CD4-positive, alpha-beta memory T cell (primary cell): ENCODE measurements at regions of chr3 and their contacts with region 1.

Region 1: DNA sequence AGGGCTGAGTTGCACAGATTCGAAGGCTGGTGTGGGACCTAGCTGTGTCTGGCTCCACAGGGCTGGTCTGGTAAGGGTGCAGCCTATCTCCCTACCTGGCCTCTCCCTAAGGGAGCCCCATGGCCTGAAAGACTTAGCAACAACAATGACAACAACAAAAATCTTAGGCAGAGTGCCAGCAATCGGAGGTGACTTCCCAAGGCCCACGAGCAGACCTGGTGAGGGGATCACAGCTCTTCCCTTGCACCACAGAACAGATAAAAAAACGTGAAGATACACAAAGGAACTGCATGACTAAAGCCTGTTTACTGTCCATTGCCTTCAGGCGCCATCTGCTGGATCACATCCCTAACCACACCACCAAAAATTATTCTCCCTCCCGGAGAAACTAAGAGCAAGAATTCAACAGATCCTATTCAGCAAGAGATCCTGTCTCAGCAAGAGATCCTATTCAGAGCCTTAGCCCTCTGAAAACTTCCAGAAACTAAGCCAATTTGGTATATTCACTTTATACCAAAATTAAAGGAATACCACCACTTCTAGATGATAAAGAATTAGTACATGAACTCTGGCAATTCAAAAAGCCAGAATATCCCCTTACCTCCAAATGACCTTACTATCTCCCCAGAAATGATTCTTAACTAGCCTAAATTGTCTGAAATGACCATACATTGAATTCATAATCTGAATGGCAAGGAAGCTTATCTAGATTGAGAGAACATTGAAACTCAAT is 24.1 kb upstream of the OR5K4 start:
- DNase-seq: peak; percentile 38 to 56 (median 51)
- H3K4me3 ChIP-seq: no peak overlapping the region
- H3K4me3 Mint-ChIP-seq: peak overlapping the region in 1 of 8 donors; percentile 0
- H3K27ac ChIP-seq: no peak overlapping the region
- H3K27ac Mint-ChIP-seq: peak overlapping the region in 1 of 7 donors; percentile 6
- H3K4me1 ChIP-seq: no peaks in the 10 kb centered on the region
- H3K4me1 Mint-ChIP-seq: peaks cover 0 to 4% (median 2%) of the 10 kb centered on the region in 4 donors
- H3K27me3 ChIP-seq: no peaks in the 10 kb centered on the region
- H3K27me3 Mint-ChIP-seq: peaks cover 12 to 13% of the 10 kb centered on the region in 2 donors

Region 2: GRCh38 chr3:98188545-98188944 is 141.0 kb before region 1 on chr3:
- CTCF ChIA-PET with region 1: interaction called, 3 read pairs
- POLR2A ChIA-PET with region 1: no interaction called
- intact Hi-C with region 1: loop called (anchors 1 kb)
- DNase-seq: peak in 4 of 5 donors; percentile 15 to 26 (median 17)
- H3K4me3 ChIP-seq: no peak overlapping the region
- H3K4me3 Mint-ChIP-seq: peak overlapping the region in 1 of 8 donors; percentile 37
- H3K27ac ChIP-seq: no peak overlapping the region
- H3K27ac Mint-ChIP-seq: peak overlapping the region in 2 of 7 donors; percentile 25 to 44
- H3K4me1 ChIP-seq: no peaks in the 10 kb centered on the region
- H3K4me1 Mint-ChIP-seq: peaks cover 0 to 7% (median 2%) of the 10 kb centered on the region in 4 donors
- H3K27me3 ChIP-seq: no peaks in the 10 kb centered on the region
- H3K27me3 Mint-ChIP-seq: peaks cover 3 to 7% of the 10 kb centered on the region in 2 donors

Region 3: DNA sequence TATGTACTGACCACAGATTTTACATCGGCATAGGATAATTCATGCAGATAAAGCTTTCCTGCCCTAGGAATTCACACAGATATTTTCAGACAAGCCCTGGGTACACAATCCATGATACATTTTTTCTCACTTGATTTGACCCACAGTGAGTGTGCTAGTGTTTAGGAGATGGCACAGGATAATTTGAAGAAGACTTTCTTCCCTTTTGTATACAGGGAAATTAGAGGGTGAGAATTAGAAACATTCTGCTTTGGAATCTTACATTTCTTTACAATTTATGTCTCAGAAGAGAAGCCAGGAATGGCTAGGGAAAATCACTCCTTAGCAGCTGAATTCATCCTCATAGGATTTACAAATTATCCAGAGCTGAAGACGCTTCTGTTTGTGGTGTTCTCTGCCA is 24.0 kb after region 1 on chr3 and contains the start of gene OR5K4:
- CTCF ChIA-PET with region 1: no interaction called
- POLR2A ChIA-PET with region 1: no interaction called
- intact Hi-C with region 1: no loop called
- DNase-seq: no peak
- H3K4me3 ChIP-seq: no peak within 1 kb of the TSS
- H3K4me3 Mint-ChIP-seq: no peak within 1 kb of the TSS
- H3K27ac ChIP-seq: no peak within 1 kb of the TSS
- H3K27ac Mint-ChIP-seq: no peak within 1 kb of the TSS
- H3K4me1 ChIP-seq: no peaks in the 10 kb centered on the region
- H3K4me1 Mint-ChIP-seq: no peaks in the 10 kb centered on the region
- H3K27me3 ChIP-seq: no peaks in the 10 kb centered on the region
- H3K27me3 Mint-ChIP-seq: peaks cover 0 to 6% of the 10 kb centered on the region in 2 donors
- total RNA-seq, gene OR5K4: not detected

Region 4: GRCh38 chr3:98657457-98657856 is 327.9 kb after region 1 on chr3:
- CTCF ChIA-PET with region 1: no interaction called
- POLR2A ChIA-PET with region 1: no interaction called
- intact Hi-C with region 1: loop called (anchors 5 kb)
- DNase-seq: peak in 4 of 5 donors; percentile 16 to 32 (median 20)
- H3K4me3 ChIP-seq: no peak overlapping the region
- H3K4me3 Mint-ChIP-seq: peak overlapping the region in 1 of 8 donors; percentile 14
- H3K27ac ChIP-seq: no peak overlapping the region
- H3K27ac Mint-ChIP-seq: no peak overlapping the region
- H3K4me1 ChIP-seq: no peaks in the 10 kb centered on the region
- H3K4me1 Mint-ChIP-seq: peaks cover 0 to 7% (median 4%) of the 10 kb centered on the region in 4 donors
- H3K27me3 ChIP-seq: no peaks in the 10 kb centered on the region
- H3K27me3 Mint-ChIP-seq: peaks cover 14 to 16% of the 10 kb centered on the region in 2 donors